Activated B cell treated with CpG ODN at 0.5 μM for 24 hours (primary cell): ENCODE measurements at regions of chrX and their contacts with region 1.

Region 1: DNA sequence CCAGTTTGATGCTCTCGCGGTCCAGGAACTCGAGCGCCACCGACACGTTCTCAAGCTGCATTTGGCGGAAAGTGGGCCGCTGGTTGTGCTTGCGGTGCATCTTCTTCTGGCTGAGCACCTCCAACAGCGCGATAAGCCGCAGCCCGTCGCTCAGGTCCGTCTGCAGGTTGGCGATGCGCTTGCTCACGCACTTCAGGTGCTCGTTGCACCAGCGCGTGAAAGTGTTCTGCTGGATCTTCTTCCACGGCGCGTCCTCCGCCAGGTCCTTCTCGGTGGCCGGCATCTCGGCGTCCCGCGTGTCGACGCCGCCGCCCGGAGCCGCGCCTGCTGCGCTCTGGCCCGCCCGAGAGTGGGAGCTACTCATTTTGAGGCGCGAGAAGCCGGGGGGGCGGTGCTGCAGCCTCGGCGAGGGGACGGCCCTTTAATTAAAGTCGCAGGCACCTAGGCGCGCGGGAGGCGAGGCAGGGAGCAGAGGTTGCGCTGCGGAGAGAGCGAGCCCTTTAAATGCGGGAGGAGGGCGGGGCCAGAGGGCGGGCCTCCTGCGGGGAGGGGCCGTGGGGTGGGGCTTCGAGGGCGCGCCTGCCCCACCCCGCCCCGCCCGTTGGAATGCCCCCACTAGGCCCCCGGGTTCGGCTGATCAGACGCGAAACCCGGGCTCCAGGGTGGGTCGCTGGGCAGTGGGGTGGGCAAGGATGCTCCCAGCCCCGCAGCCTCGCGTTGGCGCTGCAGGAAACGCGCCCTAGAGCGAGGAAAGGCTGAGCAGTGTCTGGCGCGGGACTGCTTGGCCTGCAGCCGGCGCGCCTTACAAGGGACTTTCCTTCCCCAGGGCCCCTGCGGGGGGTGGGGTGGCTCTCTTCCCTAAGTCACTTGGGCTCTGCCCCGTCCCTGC is 3.3 kb downstream of the FLNA start:
- DNase-seq: peak; percentile 76
- ATAC-seq: peak; percentile 64
- H3K4me3 Mint-ChIP-seq: peak overlapping the region; percentile 84
- H3K27ac Mint-ChIP-seq: peak overlapping the region; percentile 69
- H3K4me1 Mint-ChIP-seq: peaks cover 34% of the 10 kb centered on the region
- H3K27me3 Mint-ChIP-seq: no peaks in the 10 kb centered on the region
- CTCF ChIP-seq: no peak

Region 2: GRCh38 chrX:154348114-154348531 is 23.0 kb before region 1 on chrX:
- CTCF ChIA-PET with region 1: interaction called, 4 read pairs
- POLR2A ChIA-PET with region 1: interaction called, 56 read pairs
- intact Hi-C with region 1: no loop called
- DNase-seq: no peak
- ATAC-seq: no peak
- H3K4me3 Mint-ChIP-seq: no peak overlapping the region
- H3K27ac Mint-ChIP-seq: peak overlapping the region; percentile 59
- H3K4me1 Mint-ChIP-seq: peaks cover 43% of the 10 kb centered on the region
- H3K27me3 Mint-ChIP-seq: no peaks in the 10 kb centered on the region
- CTCF ChIP-seq: no peak

Region 3: DNA sequence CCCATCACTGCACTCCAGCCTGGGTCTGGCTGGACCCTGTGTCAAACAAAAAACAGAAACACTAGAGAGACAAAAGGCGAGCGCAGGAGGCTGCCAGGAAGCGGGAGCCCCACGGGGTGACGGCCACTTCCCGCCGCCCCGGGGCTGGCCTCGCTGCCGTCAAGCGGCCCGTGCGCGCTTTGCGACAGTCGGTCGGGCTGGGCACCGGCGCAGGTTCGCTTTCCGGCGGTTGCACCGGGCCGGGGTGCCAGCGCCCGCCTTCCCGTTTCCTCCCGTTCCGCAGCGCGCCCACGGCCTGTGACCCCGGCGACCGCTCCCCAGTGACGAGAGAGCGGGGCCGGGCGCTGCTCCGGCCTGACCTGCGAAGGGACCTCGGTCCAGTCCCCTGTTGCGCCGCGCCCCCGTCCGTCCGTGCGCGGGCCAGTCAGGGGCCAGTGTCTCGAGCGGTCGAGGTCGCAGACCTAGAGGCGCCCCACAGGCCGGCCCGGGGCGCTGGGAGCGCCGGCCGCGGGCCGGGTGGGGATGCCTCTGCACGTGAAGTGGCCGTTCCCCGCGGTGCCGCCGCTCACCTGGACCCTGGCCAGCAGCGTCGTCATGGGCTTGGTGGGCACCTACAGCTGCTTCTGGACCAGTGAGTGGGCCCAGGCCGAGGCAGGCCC is 40.3 kb after region 1 on chrX and contains the start of gene TAFAZZIN:
- CTCF ChIA-PET with region 1: interaction called, 3 read pairs
- POLR2A ChIA-PET with region 1: interaction called, 5 read pairs
- intact Hi-C with region 1: loop called (anchors 1 kb)
- DNase-seq: peak; percentile 60
- ATAC-seq: peak; percentile 69
- H3K4me3 Mint-ChIP-seq: peak within 1 kb of the TSS; percentile 88
- H3K27ac Mint-ChIP-seq: peak within 1 kb of the TSS; percentile 87
- H3K4me1 Mint-ChIP-seq: peaks cover 24% of the 10 kb centered on the region
- H3K27me3 Mint-ChIP-seq: no peaks in the 10 kb centered on the region
- CTCF ChIP-seq: no peak
- total RNA-seq, gene TAFAZZIN: 50.5 and 66.1 TPM in 2 replicates

Region 4: GRCh38 chrX:154452823-154453222 is 81.7 kb after region 1 on chrX:
- CTCF ChIA-PET with region 1: no interaction called
- POLR2A ChIA-PET with region 1: interaction called, 10 read pairs
- intact Hi-C with region 1: no loop called
- DNase-seq: no peak
- ATAC-seq: no peak
- H3K4me3 Mint-ChIP-seq: no peak overlapping the region
- H3K27ac Mint-ChIP-seq: no peak overlapping the region
- H3K4me1 Mint-ChIP-seq: peaks cover 5% of the 10 kb centered on the region
- H3K27me3 Mint-ChIP-seq: no peaks in the 10 kb centered on the region
- CTCF ChIP-seq: no peak

Region 5: DNA sequence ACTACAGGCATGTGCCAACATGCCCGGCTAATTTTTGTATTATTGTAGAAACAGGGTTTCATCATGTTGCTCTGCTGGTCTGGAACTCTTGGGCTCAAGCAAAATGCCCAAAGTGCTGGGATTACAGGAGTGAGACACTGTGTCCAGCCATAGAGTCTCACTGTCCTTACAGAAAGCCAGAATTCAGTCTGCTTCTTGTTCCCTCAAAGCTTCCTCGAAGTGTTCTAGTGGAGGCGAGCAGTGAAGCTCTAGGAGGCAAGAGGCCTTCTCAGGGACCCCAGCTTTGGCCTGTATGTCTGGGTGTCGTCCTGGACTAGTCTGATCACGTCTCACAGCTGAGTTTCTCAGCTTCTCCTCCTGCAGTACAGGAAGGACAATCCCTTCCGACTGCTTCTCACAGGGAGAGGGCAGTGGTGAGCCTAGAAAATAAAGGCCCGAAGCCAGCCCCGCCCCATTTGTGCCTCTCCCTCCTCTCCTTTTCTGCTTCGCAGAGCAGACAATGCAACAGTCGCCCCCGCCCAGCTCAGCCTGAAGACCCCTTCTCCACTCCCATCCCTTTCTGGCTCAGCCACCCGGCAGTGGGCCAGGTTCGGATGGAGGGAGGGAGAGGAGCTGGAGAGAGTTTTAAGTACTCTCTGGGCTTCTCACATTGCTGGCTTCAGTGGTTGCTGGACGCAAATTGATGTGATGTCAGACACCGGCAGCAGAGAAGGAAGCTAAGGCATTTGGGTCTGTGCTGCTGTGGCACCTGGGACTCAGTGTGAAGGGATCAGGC is 156.0 kb after region 1 on chrX:
- CTCF ChIA-PET with region 1: interaction called, 10 read pairs
- POLR2A ChIA-PET with region 1: interaction called, 6 read pairs
- intact Hi-C with region 1: no loop called
- DNase-seq: peak; percentile 44
- ATAC-seq: peak; percentile 90
- H3K4me3 Mint-ChIP-seq: peak overlapping the region; percentile 68
- H3K27ac Mint-ChIP-seq: peak overlapping the region; percentile 76
- H3K4me1 Mint-ChIP-seq: peaks cover 14% of the 10 kb centered on the region
- H3K27me3 Mint-ChIP-seq: no peaks in the 10 kb centered on the region
- CTCF ChIP-seq: no peak

Region 6: GRCh38 chrX:154547245-154548027 is 176.3 kb after region 1 on chrX and contains the start of gene IKBKG:
- CTCF ChIA-PET with region 1: interaction called, 6 read pairs
- POLR2A ChIA-PET with region 1: interaction called, 8 read pairs
- intact Hi-C with region 1: loop called (anchors 1 kb)
- DNase-seq: peak; percentile 86
- ATAC-seq: peak; percentile 81
- H3K4me3 Mint-ChIP-seq: peak within 1 kb of the TSS; percentile 86
- H3K27ac Mint-ChIP-seq: peak within 1 kb of the TSS; percentile 95
- H3K4me1 Mint-ChIP-seq: peaks cover 45% of the 10 kb centered on the region
- H3K27me3 Mint-ChIP-seq: no peaks in the 10 kb centered on the region
- CTCF ChIP-seq: no peak
- total RNA-seq, gene IKBKG: 52.9 and 61.1 TPM in 2 replicates